ENCODE measurements at regions of chr5 and their contacts with region 1.

Region 1: DNA sequence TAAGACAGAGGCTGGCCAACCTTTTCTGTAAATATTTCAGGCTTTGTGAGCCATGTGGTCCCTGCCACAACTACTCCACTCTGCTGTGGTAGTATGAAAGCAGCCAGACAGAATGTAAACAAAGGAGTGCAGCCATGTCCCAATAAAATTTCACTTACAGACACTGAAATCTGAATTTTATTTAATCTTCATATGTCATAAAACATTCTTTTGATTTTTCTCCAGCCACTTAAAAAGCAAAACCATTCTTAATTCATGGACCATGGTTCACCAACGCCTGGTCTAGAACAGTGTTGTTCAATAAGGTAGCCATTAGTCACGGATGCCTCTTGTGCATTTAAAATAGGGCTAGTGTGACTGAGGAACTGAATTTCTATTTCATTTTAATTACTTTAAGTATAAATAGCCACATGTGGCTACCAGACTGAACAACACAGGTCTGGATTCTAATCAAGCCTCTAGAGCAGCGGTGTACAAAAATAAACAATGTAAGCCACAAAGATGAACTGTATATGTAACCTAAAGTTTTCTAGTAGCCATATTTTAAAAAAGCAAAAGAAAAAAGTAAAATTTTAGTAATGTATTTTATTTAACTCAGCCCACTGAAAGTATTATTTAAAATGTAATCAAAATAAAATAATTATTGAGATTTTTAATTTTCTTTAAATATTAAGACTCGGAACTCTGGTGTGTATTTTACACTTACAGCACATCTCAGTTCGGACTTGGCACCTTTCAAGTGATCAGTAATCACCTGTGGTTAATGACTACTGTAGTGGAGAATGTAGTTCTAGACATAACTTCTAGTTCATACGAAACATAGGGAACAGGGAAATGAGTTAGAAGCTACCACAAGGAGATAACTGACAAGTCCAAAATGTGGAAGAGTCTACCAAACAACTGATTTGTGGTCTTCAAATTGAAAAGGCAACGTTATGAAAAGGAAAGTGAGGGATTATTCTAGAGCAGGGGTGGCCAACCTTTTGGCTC is 14.3 kb downstream of the GEMIN5 start:
- DNase-seq: no peak
- ATAC-seq: no peak
- H3K4me3 ChIP-seq: no peak overlapping the region
- H3K27ac ChIP-seq: no peak overlapping the region
- H3K4me1 ChIP-seq: no peaks in the 10 kb centered on the region
- H3K27me3 ChIP-seq: no peaks in the 10 kb centered on the region
- CTCF ChIP-seq: no peak

Region 2: GRCh38 chr5:154885439-154885838 is 38.3 kb before region 1 on chr5:
- intact Hi-C with region 1: loop called in 1 of 2 experiments (anchors 5 kb)
- DNase-seq: no peak
- ATAC-seq: no peak
- H3K4me3 ChIP-seq: no peak overlapping the region
- H3K27ac ChIP-seq: no peak overlapping the region
- H3K4me1 ChIP-seq: no peaks in the 10 kb centered on the region
- H3K27me3 ChIP-seq: no peaks in the 10 kb centered on the region
- CTCF ChIP-seq: no peak

Region 3: GRCh38 chr5:154995679-154996078 is 71.9 kb after region 1 on chr5:
- intact Hi-C with region 1: no loop called
- DNase-seq: no peak
- ATAC-seq: no peak
- H3K4me3 ChIP-seq: no peak overlapping the region
- H3K27ac ChIP-seq: no peak overlapping the region
- H3K4me1 ChIP-seq: no peaks in the 10 kb centered on the region
- H3K27me3 ChIP-seq: no peaks in the 10 kb centered on the region
- CTCF ChIP-seq: no peak

Measured in psoas muscle (tissue), 8 donors.